ENCODE measurements at regions of chr18 and their contacts with region 1.

Region 1: GRCh38 chr18:74679006-74679678 is 81.5 kb downstream of the ZNF407 start:
- DNase-seq: peak; percentile 38
- ATAC-seq: peak; percentile 89
- H3K4me3 ChIP-seq: no peak overlapping the region
- H3K27ac ChIP-seq: no peak overlapping the region
- H3K4me1 ChIP-seq: peaks cover 3% of the 10 kb centered on the region; the same call in 1 of the 2 replicates
- H3K27me3 ChIP-seq: no peaks in the 10 kb centered on the region
- CTCF ChIP-seq: no peak
- EP300 ChIP-seq: peak in 1 of 2 experiments; percentile 44; a peak in 1 of 4 replicates
- POLR2A ChIP-seq: no peak
- RAD21 ChIP-seq: no peak

Region 2: GRCh38 chr18:74396171-74397169 is 282.7 kb before region 1 on chr18:
- CTCF ChIA-PET with region 1: no interaction called
- POLR2A ChIA-PET with region 1: no interaction called
- RAD21 ChIA-PET with region 1: no interaction called
- SMC1A ChIA-PET with region 1: no interaction called
- in situ Hi-C with region 1: no loop called
- intact Hi-C with region 1: no loop called
- DNase-seq: no peak
- ATAC-seq: no peak
- H3K4me3 ChIP-seq: no peak overlapping the region
- H3K27ac ChIP-seq: no peak overlapping the region
- H3K4me1 ChIP-seq: no peaks in the 10 kb centered on the region
- H3K27me3 ChIP-seq: peaks cover 5 to 9% of the 10 kb centered on the region in 2 experiments
- CTCF ChIP-seq: no peak
- EP300 ChIP-seq: no peak
- POLR2A ChIP-seq: no peak
- RAD21 ChIP-seq: no peak

Region 3: GRCh38 chr18:74806700-74807416 is 127.7 kb after region 1 on chr18:
- CTCF ChIA-PET with region 1: no interaction called
- POLR2A ChIA-PET with region 1: no interaction called
- RAD21 ChIA-PET with region 1: no interaction called
- SMC1A ChIA-PET with region 1: no interaction called
- in situ Hi-C with region 1: no loop called
- intact Hi-C with region 1: loop called (anchors 5 kb)
- DNase-seq: peak; percentile 73
- ATAC-seq: peak; percentile 98
- H3K4me3 ChIP-seq: peak overlapping the region; percentile 35; the same call in 1 of the 2 replicates
- H3K27ac ChIP-seq: peak overlapping the region; percentile 82
- H3K4me1 ChIP-seq: peaks cover 19% of the 10 kb centered on the region
- H3K27me3 ChIP-seq: no peaks in the 10 kb centered on the region
- CTCF ChIP-seq: no peak
- EP300 ChIP-seq: peak in 1 of 2 experiments; percentile 77; a peak in 2 of 4 replicates
- POLR2A ChIP-seq: no peak
- RAD21 ChIP-seq: no peak

Measured in GM12878 (cell line).